ENCODE measurements at regions of chrX and their contacts with region 1.

Region 1: GRCh38 chrX:124018023-124018422 is 56.5 kb downstream of the STAG2 start:
- DNase-seq: peak; percentile 7
- H3K4me3 ChIP-seq: no peak overlapping the region
- H3K27ac ChIP-seq: no peak overlapping the region
- H3K4me1 ChIP-seq: peaks cover 7% of the 10 kb centered on the region
- H3K27me3 ChIP-seq: no peaks in the 10 kb centered on the region
- CTCF ChIP-seq: no peak
- POLR2A ChIP-seq: no peak

Region 2: GRCh38 chrX:123807835-123808416 is 210.1 kb before region 1 on chrX:
- CTCF ChIA-PET with region 1: no interaction called
- POLR2A ChIA-PET with region 1: no interaction called
- dilution Hi-C with region 1: no loop called
- intact Hi-C with region 1: no loop called
- DNase-seq: no peak
- H3K4me3 ChIP-seq: no peak overlapping the region
- H3K27ac ChIP-seq: no peak overlapping the region
- H3K4me1 ChIP-seq: peaks cover 6% of the 10 kb centered on the region
- H3K27me3 ChIP-seq: no peaks in the 10 kb centered on the region
- CTCF ChIP-seq: no peak
- POLR2A ChIP-seq: no peak

Region 3: GRCh38 chrX:123976706-123977316 is 41.2 kb before region 1 on chrX:
- CTCF ChIA-PET with region 1: interaction called, 10 read pairs
- POLR2A ChIA-PET with region 1: no interaction called
- dilution Hi-C with region 1: no loop called
- intact Hi-C with region 1: no loop called
- DNase-seq: peak; percentile 57
- H3K4me3 ChIP-seq: no peak overlapping the region
- H3K27ac ChIP-seq: no peak overlapping the region
- H3K4me1 ChIP-seq: peaks cover 12% of the 10 kb centered on the region
- H3K27me3 ChIP-seq: no peaks in the 10 kb centered on the region
- CTCF ChIP-seq: no peak
- POLR2A ChIP-seq: no peak

Region 4: DNA sequence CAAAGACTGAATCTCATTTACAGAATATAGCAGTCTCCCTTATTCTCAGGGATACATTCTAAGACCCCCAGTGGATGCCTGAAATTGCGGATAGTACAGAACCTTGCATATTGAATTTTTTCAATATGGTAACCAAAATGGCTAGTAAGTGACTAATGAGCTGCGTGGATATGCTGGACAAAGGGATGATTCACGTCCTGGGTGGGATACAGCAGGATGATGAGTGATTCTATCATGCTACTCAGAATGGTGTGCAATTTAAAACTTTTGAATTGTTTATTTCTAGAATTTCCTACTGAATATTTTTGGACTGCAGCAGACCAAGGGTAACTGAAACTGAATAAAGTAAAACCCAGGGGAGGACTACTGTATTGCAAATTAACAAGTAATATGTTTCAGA is 10.2 kb after region 1 on chrX:
- CTCF ChIA-PET with region 1: no interaction called
- POLR2A ChIA-PET with region 1: no interaction called
- dilution Hi-C with region 1: no loop called
- intact Hi-C with region 1: no loop called
- DNase-seq: no peak
- H3K4me3 ChIP-seq: no peak overlapping the region
- H3K27ac ChIP-seq: no peak overlapping the region
- H3K4me1 ChIP-seq: peaks cover 5% of the 10 kb centered on the region
- H3K27me3 ChIP-seq: no peaks in the 10 kb centered on the region
- CTCF ChIP-seq: no peak
- POLR2A ChIP-seq: no peak